ENCODE measurements at regions of chr3 and their contacts with region 1.

Region 1: DNA sequence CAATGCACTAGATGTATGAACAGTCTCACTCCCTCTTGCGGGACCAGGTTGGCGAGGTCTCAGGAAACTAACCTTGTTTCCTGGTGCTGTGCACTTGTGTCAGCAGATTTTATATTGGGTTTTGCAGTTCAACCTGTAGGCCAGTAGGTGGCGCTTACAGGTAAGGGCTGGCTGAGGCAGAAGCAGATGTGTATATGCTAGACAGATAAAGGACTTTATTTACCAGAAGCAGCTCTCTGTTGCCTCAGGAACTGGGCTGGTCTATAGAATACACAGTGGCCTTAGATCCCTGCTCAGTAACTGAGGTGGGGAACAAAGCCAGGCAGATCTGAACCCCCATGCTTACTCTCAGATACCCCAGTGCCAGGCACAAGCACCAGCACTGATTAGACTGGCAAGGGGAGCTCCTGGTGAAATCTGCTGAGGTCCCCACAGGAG is 296.8 kb downstream of the DOCK3 start:
- DNase-seq: peak; percentile 20 to 85 (median 47)
- ATAC-seq: peak; percentile 96
- H3K4me3 ChIP-seq: no peak overlapping the region
- H3K4me3 Mint-ChIP-seq: no peak overlapping the region
- H3K27ac ChIP-seq: no peak overlapping the region
- H3K27ac Mint-ChIP-seq: no peak overlapping the region
- H3K4me1 ChIP-seq: peaks cover 12% of the 10 kb centered on the region
- H3K4me1 Mint-ChIP-seq: peaks cover 17% of the 10 kb centered on the region
- H3K27me3 ChIP-seq: no peaks in the 10 kb centered on the region
- H3K27me3 Mint-ChIP-seq: no peaks in the 10 kb centered on the region
- CTCF ChIP-seq: peak; percentile 95

Region 2: GRCh38 chr3:51024765-51025632 is 53.5 kb after region 1 on chr3:
- CTCF ChIA-PET with region 1: no interaction called
- POLR2A ChIA-PET with region 1: interaction called, 15 read pairs
- intact Hi-C with region 1: loop called (anchors 5 to 10 kb)
- DNase-seq: peak; percentile 60 to 92 (median 76)
- ATAC-seq: peak; percentile 96
- H3K4me3 ChIP-seq: peak overlapping the region; percentile 32
- H3K4me3 Mint-ChIP-seq: peak overlapping the region; percentile 74
- H3K27ac ChIP-seq: peak overlapping the region; percentile 69
- H3K27ac Mint-ChIP-seq: peak overlapping the region; percentile 95
- H3K4me1 ChIP-seq: peaks cover 33% of the 10 kb centered on the region
- H3K4me1 Mint-ChIP-seq: peaks cover 66% of the 10 kb centered on the region
- H3K27me3 ChIP-seq: no peaks in the 10 kb centered on the region
- H3K27me3 Mint-ChIP-seq: no peaks in the 10 kb centered on the region
- CTCF ChIP-seq: no peak

Region 3: GRCh38 chr3:51190199-51190839 is 218.8 kb after region 1 on chr3:
- CTCF ChIA-PET with region 1: no interaction called
- POLR2A ChIA-PET with region 1: no interaction called
- intact Hi-C with region 1: loop called (anchors 2 to 5 kb)
- DNase-seq: peak in 3 of 14 experiments; percentile 16 to 20 (median 17)
- ATAC-seq: no peak
- H3K4me3 ChIP-seq: no peak overlapping the region
- H3K4me3 Mint-ChIP-seq: no peak overlapping the region
- H3K27ac ChIP-seq: no peak overlapping the region
- H3K27ac Mint-ChIP-seq: no peak overlapping the region
- H3K4me1 ChIP-seq: no peaks in the 10 kb centered on the region
- H3K4me1 Mint-ChIP-seq: peaks cover 25% of the 10 kb centered on the region
- H3K27me3 ChIP-seq: no peaks in the 10 kb centered on the region
- H3K27me3 Mint-ChIP-seq: no peaks in the 10 kb centered on the region
- CTCF ChIP-seq: no peak

Region 4: GRCh38 chr3:51311055-51311454 is 339.5 kb after region 1 on chr3:
- CTCF ChIA-PET with region 1: interaction called, 7 read pairs
- POLR2A ChIA-PET with region 1: interaction called, 4 read pairs
- intact Hi-C with region 1: loop called (anchors 1 kb)
- DNase-seq: peak in 4 of 14 experiments; percentile 3 to 53 (median 47)
- ATAC-seq: no peak
- H3K4me3 ChIP-seq: no peak overlapping the region
- H3K4me3 Mint-ChIP-seq: no peak overlapping the region
- H3K27ac ChIP-seq: no peak overlapping the region
- H3K27ac Mint-ChIP-seq: no peak overlapping the region
- H3K4me1 ChIP-seq: no peaks in the 10 kb centered on the region
- H3K4me1 Mint-ChIP-seq: no peaks in the 10 kb centered on the region
- H3K27me3 ChIP-seq: no peaks in the 10 kb centered on the region
- H3K27me3 Mint-ChIP-seq: peaks cover 5% of the 10 kb centered on the region
- CTCF ChIP-seq: peak; percentile 55

Region 5: DNA sequence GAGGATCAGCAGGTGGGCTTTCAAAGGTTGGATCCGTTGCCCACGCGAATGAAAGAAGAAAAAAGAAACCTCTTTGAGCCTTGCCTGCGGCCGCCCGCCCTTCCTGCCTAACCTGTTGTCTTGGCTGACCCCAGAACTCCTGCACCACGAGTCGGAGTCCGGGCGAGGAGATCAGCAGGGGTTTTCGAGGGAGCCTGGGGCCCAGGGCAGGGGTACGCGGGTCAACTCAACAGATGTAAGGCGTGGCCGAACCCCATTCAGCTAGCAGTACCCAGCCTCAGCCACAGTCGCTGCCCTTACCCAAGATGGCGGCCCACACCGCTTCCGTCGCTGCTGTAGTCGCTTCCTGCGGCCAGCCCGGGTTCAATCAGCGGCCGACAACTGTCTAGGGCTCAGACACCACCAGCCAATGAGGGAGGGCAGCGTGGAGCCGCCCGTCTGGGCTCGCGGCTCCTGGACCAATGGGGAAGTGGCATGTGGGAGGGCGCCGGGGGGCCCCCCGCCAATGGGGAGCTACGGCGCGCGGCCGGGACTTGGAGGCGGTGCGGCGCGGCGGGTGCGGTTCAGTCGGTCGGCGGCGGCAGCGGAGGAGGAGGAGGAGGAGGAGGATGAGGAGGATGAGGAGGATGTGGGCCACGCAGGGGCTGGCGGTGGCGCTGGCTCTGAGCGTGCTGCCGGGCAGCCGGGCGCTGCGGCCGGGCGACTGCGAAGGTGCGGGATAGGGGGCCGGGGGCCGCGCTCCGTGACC is 413.4 kb after region 1 on chr3 and contains the start of gene MANF:
- CTCF ChIA-PET with region 1: interaction called, 4 read pairs
- POLR2A ChIA-PET with region 1: interaction called, 3 read pairs
- intact Hi-C with region 1: loop called in 1 of 2 experiments (anchors 5 kb)
- DNase-seq: peak; percentile 93 to 99 (median 95)
- ATAC-seq: peak; percentile 95
- H3K4me3 ChIP-seq: peak within 1 kb of the TSS; percentile 99
- H3K4me3 Mint-ChIP-seq: peak within 1 kb of the TSS; percentile 99
- H3K27ac ChIP-seq: peak within 1 kb of the TSS; percentile 84 to 96
- H3K27ac Mint-ChIP-seq: peak within 1 kb of the TSS; percentile 99
- H3K4me1 ChIP-seq: peaks cover 47% of the 10 kb centered on the region
- H3K4me1 Mint-ChIP-seq: peaks cover 55% of the 10 kb centered on the region
- H3K27me3 ChIP-seq: no peaks in the 10 kb centered on the region
- H3K27me3 Mint-ChIP-seq: no peaks in the 10 kb centered on the region
- CTCF ChIP-seq: no peak
- total RNA-seq, gene MANF: 26.4 to 30.2 TPM

Measured in CD4-positive, alpha-beta T cell (primary cell).